ENCODE measurements at regions of chr10 and their contacts with region 1.

Region 1: GRCh38 chr10:125060826-125061556 is 99.4 kb downstream of the CTBP2 start:
- DNase-seq: peak; percentile 73
- H3K4me3 ChIP-seq: no peak overlapping the region
- H3K27me3 ChIP-seq: no peaks in the 10 kb centered on the region
- CTCF ChIP-seq: peak; percentile 89

Region 2: DNA sequence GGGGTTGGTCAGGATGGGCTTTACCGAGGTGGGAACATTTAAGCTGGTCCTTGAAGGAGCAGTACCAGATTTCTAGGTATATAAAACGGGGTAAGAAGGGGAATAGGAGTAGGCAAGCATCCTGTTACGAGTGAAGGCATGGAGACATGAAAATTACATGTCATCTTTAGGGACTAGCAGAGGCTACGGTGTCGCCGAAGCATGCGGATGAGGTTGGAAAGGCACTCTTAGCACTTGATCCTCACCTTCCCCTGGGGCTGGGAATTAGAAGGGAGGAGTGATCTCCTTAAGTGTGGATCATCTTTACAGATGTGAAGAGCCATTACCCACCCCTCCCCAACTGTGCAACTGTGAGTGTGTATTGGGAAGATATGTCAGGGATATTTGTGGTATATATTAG is 132.9 kb before region 1 on chr10:
- CTCF ChIA-PET with region 1: no interaction called
- POLR2A ChIA-PET with region 1: interaction called, 11 read pairs
- DNase-seq: no peak
- H3K4me3 ChIP-seq: no peak overlapping the region
- H3K27me3 ChIP-seq: no peaks in the 10 kb centered on the region
- CTCF ChIP-seq: no peak

Region 3: GRCh38 chr10:124992462-124993344 is 68.3 kb before region 1 on chr10:
- CTCF ChIA-PET with region 1: interaction called, 20 read pairs
- POLR2A ChIA-PET with region 1: no interaction called
- DNase-seq: no peak
- H3K4me3 ChIP-seq: no peak overlapping the region
- H3K27me3 ChIP-seq: no peaks in the 10 kb centered on the region
- CTCF ChIP-seq: peak; percentile 65

Region 4: DNA sequence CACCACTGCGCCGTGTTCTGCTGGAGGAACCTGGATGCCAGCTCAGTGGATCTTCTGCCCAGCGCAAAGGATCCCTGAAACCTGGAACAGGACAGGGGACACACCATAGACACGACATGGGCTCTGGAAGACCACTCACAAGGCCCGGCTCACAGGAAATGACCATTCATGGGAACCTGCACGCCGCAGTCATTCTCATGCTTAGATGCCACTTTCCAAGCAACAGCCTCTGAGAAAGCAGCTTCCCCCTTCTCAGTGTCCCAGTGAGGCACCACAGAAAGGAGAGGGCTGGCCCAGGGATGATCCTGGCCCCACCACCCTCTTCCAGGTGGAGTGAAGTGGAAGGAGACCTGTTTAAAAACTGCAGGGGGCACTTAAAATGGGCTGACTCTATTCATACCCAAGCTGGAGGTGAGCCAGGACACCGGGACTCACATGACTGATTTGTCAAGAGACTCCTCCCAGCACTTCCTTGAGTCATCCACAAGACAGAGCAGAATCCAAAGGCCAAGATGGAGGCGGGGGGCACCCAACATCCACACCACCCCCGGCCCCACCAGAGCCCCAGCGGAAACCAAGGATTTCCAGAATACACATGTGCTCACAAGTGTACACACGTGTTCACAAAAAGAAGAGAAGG is 88.2 kb after region 1 on chr10:
- CTCF ChIA-PET with region 1: interaction called, 11 read pairs
- POLR2A ChIA-PET with region 1: no interaction called
- DNase-seq: no peak
- H3K4me3 ChIP-seq: no peak overlapping the region
- H3K27me3 ChIP-seq: no peaks in the 10 kb centered on the region
- CTCF ChIP-seq: no peak